ENCODE measurements at regions of chr19 and their contacts with region 1.

Region 1: GRCh38 chr19:771332-771785 is 20.4 kb downstream of the MISP start:
- DNase-seq: peak; percentile 71
- H3K4me3 Mint-ChIP-seq: no peak overlapping the region
- H3K27ac Mint-ChIP-seq: no peak overlapping the region
- H3K4me1 Mint-ChIP-seq: no peaks in the 10 kb centered on the region
- H3K27me3 Mint-ChIP-seq: no peaks in the 10 kb centered on the region
- CTCF ChIP-seq: peak; percentile 71

Region 2: DNA sequence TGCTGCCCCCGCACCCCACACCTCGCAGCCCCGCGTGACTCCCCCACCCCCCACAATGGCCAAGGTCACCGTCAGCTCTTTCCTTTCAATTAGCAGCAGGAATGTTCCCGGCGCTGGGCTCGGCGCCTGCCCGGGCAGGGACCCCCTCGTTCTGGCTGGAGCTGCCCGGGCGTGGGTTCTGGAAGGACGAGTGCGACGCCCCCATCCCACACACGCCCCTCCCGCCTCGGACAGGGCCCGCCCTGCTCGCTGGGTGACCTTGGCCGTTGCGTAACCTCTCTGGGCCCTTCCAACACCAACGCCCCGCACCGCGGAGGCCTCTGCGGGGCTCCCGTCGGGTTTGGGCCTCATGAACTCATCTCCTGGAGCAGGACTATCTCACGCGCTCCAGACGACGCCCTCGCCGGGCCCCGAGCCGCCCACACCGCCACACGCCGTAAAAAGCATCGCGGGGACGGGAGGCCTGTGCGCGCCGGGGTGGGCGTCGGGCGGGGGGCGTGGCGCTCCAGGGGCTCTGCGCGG is 52.3 kb before region 1 on chr19:
- CTCF ChIA-PET with region 1: no interaction called
- POLR2A ChIA-PET with region 1: no interaction called
- intact Hi-C with region 1: no loop called
- DNase-seq: no peak
- H3K4me3 Mint-ChIP-seq: no peak overlapping the region
- H3K27ac Mint-ChIP-seq: no peak overlapping the region
- H3K4me1 Mint-ChIP-seq: no peaks in the 10 kb centered on the region
- H3K27me3 Mint-ChIP-seq: no peaks in the 10 kb centered on the region
- CTCF ChIP-seq: no peak

Region 3: DNA sequence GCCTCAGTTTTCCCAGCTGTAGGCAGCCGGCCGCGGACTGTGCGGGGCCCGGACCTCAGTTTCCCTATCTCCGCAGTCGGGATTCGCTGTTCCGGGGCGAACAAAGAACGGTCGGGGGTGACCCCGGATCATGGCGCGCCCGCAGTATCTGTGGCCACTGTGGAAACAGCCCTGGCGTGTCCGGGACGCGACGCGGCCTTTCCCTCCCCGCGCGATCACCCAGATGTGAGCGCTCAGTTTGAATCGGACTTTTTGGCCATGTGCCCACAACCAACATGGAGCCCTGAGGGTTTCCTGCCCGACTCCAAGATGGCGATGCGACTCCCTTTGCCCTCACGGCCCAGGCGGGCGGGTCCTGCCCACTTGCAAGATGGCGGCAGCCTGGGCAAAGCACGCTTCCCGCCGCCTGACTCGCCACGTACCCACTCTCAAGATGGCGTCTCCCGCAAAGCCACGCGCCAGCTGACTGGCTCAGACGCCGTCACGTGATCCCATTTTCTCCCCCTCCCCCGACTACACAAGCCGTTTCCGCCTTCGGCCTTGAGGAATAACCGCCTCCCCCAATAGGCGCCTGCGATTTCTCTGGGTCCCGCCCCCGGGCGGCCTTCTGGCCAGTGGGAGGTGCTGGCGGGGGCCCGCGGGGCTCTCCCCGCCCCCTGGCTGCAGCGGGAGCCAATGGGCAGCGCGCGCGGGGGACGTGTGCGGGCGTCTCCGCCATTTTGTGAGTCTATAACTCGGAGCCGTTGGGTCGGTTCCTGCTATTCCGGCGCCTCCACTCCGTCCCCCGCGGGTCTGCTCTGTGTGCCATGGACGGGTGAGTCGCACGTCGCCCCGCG is 25.6 kb after region 1 on chr19 and contains the start of gene PTBP1:
- CTCF ChIA-PET with region 1: interaction called, 10 read pairs
- POLR2A ChIA-PET with region 1: interaction called, 3 read pairs
- intact Hi-C with region 1: loop called (anchors 1 kb)
- DNase-seq: peak; percentile 100
- H3K4me3 Mint-ChIP-seq: peak within 1 kb of the TSS; percentile 91
- H3K27ac Mint-ChIP-seq: peak within 1 kb of the TSS; percentile 90
- H3K4me1 Mint-ChIP-seq: peaks cover 25% of the 10 kb centered on the region
- H3K27me3 Mint-ChIP-seq: no peaks in the 10 kb centered on the region
- CTCF ChIP-seq: no peak
- total RNA-seq, gene PTBP1: 348 and 431 TPM in 2 replicates

Region 4: DNA sequence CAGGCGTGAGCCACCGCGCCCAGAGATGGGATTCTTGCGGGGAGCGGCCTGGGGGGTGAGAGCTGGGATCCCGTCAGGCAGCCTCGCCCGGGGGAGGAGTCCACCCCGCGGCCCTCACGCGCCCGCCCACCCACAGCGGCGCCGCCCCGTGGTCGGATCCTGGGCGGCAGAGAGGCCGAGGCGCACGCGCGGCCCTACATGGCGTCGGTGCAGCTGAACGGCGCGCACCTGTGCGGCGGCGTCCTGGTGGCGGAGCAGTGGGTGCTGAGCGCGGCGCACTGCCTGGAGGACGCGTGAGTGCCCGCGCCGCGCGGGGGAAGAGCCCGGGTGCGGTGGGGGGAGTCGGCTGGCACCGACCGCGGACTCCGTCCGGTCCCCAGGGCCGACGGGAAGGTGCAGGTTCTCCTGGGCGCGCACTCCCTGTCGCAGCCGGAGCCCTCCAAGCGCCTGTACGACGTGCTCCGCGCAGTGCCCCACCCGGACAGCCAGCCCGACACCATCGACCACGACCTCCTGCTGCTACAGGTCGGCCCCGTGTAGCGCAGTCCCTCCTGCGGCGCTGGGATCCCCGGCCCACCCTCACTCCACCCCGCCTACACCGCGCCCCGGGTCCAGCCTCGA is 89.2 kb after region 1 on chr19:
- CTCF ChIA-PET with region 1: interaction called, 4 read pairs
- POLR2A ChIA-PET with region 1: no interaction called
- intact Hi-C with region 1: loop called (anchors 1 kb)
- DNase-seq: peak; percentile 45
- H3K4me3 Mint-ChIP-seq: no peak overlapping the region
- H3K27ac Mint-ChIP-seq: no peak overlapping the region
- H3K4me1 Mint-ChIP-seq: peaks cover 5% of the 10 kb centered on the region
- H3K27me3 Mint-ChIP-seq: no peaks in the 10 kb centered on the region
- CTCF ChIP-seq: no peak

Region 5: DNA sequence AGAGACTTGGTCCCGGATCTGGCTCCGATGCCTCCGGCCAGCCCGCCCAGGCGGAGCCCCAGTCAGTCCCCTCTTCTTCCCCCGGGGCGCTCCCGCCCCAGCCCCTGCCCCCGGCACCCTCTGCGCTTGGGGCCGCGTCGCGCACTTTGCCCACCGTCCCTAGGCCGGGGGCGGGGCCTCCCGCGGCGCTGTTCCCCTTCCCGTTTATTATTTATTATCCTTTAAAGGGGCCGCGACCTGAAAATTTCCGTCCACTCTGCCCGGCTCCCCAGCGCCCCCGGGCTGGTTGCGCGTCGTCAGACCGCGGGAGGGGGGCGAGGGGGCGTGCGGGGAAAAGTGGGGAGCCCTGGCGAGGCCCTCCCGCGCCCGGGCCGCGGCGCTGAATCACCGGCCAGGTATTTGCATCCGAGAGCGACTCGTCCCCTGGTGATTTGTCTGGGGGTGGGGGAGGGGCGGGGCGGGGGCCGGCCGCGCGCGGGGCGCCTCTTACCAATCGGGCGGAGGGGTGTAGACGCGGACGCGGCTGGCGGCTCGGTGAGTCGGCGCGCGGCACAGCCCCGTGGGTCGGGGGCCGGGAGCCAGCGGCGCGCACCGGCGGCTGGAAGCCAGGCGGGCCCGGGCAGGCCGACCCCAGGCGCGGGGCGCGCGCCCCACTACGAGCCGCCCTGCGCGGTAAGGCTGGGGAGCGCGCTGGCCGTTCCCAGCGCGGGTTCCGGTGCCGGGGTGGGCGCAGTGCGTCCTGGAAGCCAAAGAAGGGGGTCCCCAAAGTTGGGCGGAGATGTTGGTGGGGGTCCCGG is 154.4 kb after region 1 on chr19 and contains the start of gene ARID3A:
- CTCF ChIA-PET with region 1: interaction called, 5 read pairs
- POLR2A ChIA-PET with region 1: interaction called, 4 read pairs
- intact Hi-C with region 1: loop called (anchors 1 kb)
- DNase-seq: peak; percentile 81
- H3K4me3 Mint-ChIP-seq: peak within 1 kb of the TSS; percentile 73
- H3K27ac Mint-ChIP-seq: peak within 1 kb of the TSS; percentile 27
- H3K4me1 Mint-ChIP-seq: no peaks in the 10 kb centered on the region
- H3K27me3 Mint-ChIP-seq: no peaks in the 10 kb centered on the region
- CTCF ChIP-seq: no peak
- total RNA-seq, gene ARID3A: 10.2 and 13.1 TPM in 2 replicates

Region 6: GRCh38 chr19:1001538-1002166 is 230.3 kb after region 1 on chr19:
- CTCF ChIA-PET with region 1: no interaction called
- POLR2A ChIA-PET with region 1: no interaction called
- intact Hi-C with region 1: loop called (anchors 1 kb)
- DNase-seq: peak; percentile 51
- H3K4me3 Mint-ChIP-seq: no peak overlapping the region
- H3K27ac Mint-ChIP-seq: no peak overlapping the region
- H3K4me1 Mint-ChIP-seq: no peaks in the 10 kb centered on the region
- H3K27me3 Mint-ChIP-seq: peaks cover 17% of the 10 kb centered on the region
- CTCF ChIP-seq: peak; percentile 95

Measured in MCF 10A (cell line).